ENCODE measurements at regions of chr11 and their contacts with region 1.

Region 1: DNA sequence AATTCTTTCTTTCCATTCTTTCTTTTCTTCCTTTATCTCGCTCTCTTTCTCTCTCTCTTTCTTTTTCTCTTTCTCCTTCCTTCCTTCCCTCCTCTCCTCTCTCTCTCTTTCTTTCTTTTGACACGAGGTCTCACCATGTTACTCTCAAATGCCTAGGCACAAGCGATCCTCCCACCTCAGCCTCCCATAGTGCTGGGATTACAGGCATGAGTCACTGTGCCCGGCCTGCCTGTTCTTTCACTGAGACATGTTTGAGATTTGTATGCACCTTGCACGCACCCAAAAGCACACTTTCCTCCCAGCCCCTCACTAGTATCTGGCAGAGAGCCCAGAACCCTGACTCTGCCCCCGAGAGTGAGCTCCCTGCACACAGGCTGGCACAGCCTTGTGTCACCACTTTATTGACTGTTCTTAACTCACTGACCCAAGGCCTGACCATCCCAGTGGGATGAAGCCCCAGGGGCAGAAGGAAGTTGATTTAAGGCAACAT is 56.8 kb downstream of the CD6 start:
- DNase-seq: peak; percentile 93
- H3K4me3 Mint-ChIP-seq: peak overlapping the region; percentile 87
- H3K27ac Mint-ChIP-seq: peak overlapping the region; percentile 100
- H3K4me1 Mint-ChIP-seq: peaks cover 82% of the 10 kb centered on the region
- H3K27me3 Mint-ChIP-seq: no peaks in the 10 kb centered on the region

Region 2: DNA sequence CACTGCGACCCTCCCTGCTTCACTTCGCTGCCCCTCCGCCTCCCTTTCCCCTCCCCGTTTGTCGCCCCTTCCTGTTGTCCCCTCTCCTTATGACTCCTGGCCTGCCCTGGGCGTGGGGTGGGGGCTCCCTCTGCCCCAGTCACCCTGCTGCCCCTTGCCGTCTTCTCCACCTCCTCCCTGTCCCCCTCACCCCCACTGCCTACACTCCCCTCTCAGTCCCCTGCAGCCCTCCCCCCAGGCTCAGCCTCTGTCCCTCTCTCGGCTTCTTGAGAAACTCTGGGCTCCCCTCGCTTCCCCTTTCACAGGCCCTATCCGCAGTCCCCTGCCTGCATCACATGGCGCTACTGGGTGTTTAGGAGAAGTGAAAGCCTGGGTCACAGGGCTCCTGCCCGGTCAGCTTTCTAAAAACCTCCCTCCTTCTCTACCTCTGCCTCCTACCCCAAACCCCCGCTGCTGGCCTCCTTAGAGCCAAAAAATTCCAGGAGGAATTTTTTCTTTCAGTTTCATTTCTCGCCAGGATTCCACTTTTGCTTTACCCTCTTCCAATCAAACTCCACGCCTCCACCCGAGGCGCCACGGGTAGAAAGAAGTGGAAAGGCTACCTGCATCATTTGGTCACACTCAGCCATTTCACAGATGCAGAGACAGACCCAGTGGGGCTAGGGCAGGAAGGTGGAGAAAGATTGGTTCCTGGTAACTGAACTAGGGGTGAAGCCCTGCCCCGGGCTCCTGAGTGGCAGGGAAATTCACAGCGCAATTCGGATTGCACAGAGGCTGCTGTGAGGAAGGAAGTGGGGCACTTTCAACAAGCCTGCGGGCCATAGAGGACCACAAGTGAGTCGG is 76.2 kb before region 1 on chr11 and contains the start of gene SLC15A3:
- CTCF ChIA-PET with region 1: no interaction called
- intact Hi-C with region 1: no loop called
- DNase-seq: peak; percentile 64
- H3K4me3 Mint-ChIP-seq: peak within 1 kb of the TSS; percentile 68
- H3K27ac Mint-ChIP-seq: peak within 1 kb of the TSS; percentile 69
- H3K4me1 Mint-ChIP-seq: peaks cover 27% of the 10 kb centered on the region
- H3K27me3 Mint-ChIP-seq: no peaks in the 10 kb centered on the region
- total RNA-seq, gene SLC15A3: 5.6 to 5.8 TPM

Region 3: DNA sequence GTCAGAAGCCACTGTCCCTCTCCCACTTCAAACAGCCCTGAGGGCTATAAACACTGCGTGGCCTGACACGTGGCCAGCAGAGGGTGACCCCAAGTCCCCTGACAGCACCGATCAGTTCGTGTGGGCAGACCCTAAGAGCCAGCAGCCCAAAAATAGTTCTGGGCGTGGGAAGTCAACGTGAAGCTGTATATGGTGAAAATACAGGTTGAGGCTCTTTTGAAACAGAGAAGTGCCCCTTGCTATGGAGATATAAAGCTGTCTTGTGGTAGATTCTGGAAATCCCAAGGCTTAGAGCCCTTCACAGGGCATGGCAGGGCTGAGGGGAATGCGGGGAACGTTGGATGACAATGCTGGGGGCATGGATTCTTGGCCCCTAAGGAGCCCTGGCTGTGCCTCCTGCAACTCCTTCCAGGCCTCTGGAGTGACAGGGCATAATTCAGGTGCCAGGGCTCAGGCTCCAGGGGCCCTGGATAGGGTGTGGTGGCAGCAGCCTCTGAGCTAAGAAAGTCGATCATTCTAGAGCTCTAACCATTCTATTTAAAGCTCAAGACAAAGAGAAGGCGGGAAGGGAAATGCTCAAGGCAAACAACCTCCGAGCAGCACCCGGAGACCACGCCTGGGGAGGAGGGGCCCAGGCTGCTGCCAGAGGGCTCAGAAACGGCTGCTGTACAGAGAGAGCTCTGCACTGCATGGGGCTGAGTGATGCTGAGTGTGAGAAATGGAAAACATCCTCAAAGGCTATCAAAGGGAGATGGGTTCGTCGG is 13.6 kb after region 1 on chr11:
- CTCF ChIA-PET with region 1: interaction called, 5 read pairs
- intact Hi-C with region 1: loop called (anchors 1 kb)
- DNase-seq: peak; percentile 93
- H3K4me3 Mint-ChIP-seq: peak overlapping the region; percentile 44
- H3K27ac Mint-ChIP-seq: peak overlapping the region; percentile 97
- H3K4me1 Mint-ChIP-seq: peaks cover 70% of the 10 kb centered on the region
- H3K27me3 Mint-ChIP-seq: no peaks in the 10 kb centered on the region

Region 4: GRCh38 chr11:61052182-61052972 is 24.1 kb after region 1 on chr11:
- CTCF ChIA-PET with region 1: no interaction called
- intact Hi-C with region 1: no loop called
- DNase-seq: no peak
- H3K4me3 Mint-ChIP-seq: no peak overlapping the region
- H3K27ac Mint-ChIP-seq: no peak overlapping the region
- H3K4me1 Mint-ChIP-seq: peaks cover 86% of the 10 kb centered on the region
- H3K27me3 Mint-ChIP-seq: no peaks in the 10 kb centered on the region

Region 5: DNA sequence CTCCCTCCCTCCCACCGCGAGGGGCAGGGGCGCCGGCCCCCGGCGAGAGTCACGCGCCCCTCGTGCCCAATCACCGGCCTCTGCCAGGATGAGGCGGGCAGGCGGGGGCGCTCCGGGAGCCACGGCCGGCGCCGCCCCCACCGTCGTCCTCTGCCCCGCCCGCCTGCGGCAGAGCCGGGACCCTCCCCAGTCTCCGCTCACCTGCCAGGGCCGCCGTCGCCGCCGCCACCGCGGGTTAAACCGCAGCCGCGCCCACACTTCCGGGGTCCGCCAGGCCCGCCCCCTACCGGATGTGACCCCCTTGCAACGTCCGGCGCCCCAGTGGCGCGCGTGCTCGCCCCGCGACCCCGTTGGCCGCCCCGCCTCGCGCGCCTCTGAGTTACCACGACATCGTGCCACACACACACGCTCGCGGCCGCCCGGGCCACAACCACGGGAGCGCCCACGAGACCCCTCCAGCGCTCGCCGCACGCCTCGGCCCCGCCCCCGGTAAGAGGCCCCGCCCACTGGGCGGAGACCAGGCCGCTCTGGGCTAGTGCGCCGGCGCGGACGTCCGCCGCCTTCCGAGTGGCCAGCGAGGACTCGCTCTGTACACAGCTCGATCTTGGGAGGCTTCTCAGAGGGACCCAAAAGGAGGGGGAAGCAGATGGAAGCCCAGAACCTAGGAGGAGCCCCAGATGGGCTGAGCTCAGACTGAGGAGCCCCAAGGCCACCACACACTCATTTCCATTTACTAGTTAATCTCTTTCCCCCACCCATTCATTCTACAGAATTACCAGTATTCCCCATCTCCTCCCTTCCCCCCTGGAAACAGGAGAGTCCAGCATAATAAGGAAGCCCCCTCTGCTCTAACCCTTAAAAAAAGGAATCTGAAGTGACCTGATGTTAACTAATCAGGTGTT is 133.1 kb after region 1 on chr11 and contains the start of gene VPS37C:
- CTCF ChIA-PET with region 1: no interaction called
- intact Hi-C with region 1: loop called (anchors 1 kb)
- DNase-seq: peak; percentile 91
- H3K4me3 Mint-ChIP-seq: peak within 1 kb of the TSS; percentile 94
- H3K27ac Mint-ChIP-seq: peak within 1 kb of the TSS; percentile 93
- H3K4me1 Mint-ChIP-seq: peaks cover 62% of the 10 kb centered on the region
- H3K27me3 Mint-ChIP-seq: no peaks in the 10 kb centered on the region
- total RNA-seq, gene VPS37C: 8.5 to 8.9 TPM

Measured in activated naive CD4-positive, alpha-beta T cell treated with anti-CD3 and anti-CD28 coated beads for 36 hours (primary cell).